Heart right ventricle (tissue), 16 donors: ENCODE measurements at regions of chr16 and their contacts with region 1.

Region 1: DNA sequence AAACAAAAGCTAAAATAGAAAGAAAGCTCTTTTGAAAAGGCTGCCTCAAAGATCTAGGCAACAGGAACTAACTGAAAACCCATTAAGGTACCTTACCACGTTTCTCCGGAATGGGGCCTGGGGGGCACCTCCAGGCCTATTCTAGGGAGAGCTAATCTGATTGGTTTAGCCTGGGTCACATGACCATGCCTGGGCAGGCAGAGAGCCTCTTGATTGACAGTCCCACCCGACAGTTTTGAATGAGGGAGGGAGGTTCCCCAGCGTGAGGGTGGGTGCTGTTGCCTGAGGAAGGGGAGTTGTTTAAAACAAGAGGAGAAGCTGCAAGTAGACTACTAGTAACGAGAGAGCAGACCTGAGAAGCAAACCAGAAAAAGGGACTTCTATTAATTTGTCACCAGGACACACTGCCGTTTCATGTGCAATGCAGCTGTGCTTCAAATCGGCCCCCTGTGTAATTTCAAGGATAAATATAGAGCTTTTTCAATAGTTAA is 143.4 kb upstream of the HS3ST2 start:
- DNase-seq: no peak
- ATAC-seq: peak in 2 of 8 donors; percentile 31 to 42
- H3K4me3 ChIP-seq: no peak overlapping the region
- H3K27ac ChIP-seq: no peak overlapping the region
- H3K4me1 ChIP-seq: peaks cover 0 to 33% (median 6%) of the 10 kb centered on the region in 9 donors
- H3K27me3 ChIP-seq: peaks cover 0 to 17% (median 7%) of the 10 kb centered on the region in 7 donors
- CTCF ChIP-seq: no peak

Region 2: GRCh38 chr16:21179126-21179982 is 1491.2 kb before region 1 on chr16:
- intact Hi-C with region 1: loop called in 1 of 10 experiments (anchors 10 kb)
- DNase-seq: peak in 1 of 2 donors; percentile 15
- ATAC-seq: peak in 7 of 8 donors; percentile 22 to 92 (median 62)
- H3K4me3 ChIP-seq: no peak overlapping the region
- H3K27ac ChIP-seq: peak overlapping the region in 3 of 10 donors; percentile 21 to 37 (median 25)
- H3K4me1 ChIP-seq: peaks cover 0 to 9% (median 0%) of the 10 kb centered on the region in 9 donors
- H3K27me3 ChIP-seq: no peaks in the 10 kb centered on the region
- CTCF ChIP-seq: no peak

Region 3: DNA sequence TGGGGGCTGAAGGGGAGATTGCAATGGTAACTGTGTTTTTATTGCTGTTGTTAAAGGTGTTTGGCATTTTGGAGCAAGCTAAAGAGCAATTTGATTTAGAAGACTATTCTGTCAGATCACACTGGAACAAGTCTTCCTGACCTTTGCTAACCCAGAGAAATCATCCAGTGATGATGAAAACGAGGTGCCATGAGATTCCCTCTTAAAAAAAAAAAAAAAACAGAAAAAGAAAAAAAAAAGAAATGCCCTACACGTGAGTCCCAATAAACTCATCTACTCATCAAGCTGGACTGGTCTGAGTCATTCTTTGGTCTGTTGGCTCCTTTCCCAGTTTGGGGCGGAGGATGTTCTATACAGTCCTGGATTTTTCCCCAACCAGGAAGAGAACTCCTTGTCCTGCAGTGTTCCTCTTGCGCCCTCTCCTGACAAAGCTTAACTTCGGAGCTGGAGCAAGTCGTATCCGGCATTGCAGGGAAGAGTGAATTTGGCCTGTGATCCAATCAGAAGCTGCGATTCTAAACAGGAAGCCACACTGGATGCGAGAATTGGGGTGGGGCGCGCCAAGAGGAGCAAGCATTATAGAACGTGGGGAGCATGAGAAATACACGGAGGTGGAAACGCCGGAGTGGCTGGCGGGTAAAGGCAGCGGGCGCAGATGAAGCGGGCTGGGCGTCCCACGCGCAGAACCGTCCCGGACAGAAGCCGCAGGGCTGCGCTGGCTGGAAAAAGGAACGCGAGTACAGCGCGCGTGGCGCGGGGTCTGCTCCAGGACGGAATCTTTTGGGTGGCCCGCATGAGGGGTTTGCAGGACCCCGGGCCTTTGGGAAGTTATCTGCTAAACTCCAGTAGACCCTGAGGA is 1370.1 kb before region 1 on chr16:
- intact Hi-C with region 1: loop called in 2 of 10 experiments (anchors 10 kb)
- DNase-seq: peak; percentile 72 to 98
- ATAC-seq: peak; percentile 93 to 99 (median 96)
- H3K4me3 ChIP-seq: peak overlapping the region; percentile 7 to 79 (median 64)
- H3K27ac ChIP-seq: peak overlapping the region; percentile 14 to 87 (median 73)
- H3K4me1 ChIP-seq: peaks cover 0 to 19% (median 7%) of the 10 kb centered on the region in 9 donors
- H3K27me3 ChIP-seq: peaks cover 0 to 22% (median 0%) of the 10 kb centered on the region in 7 donors
- CTCF ChIP-seq: peak; percentile 62 to 97 (median 82)

Region 4: DNA sequence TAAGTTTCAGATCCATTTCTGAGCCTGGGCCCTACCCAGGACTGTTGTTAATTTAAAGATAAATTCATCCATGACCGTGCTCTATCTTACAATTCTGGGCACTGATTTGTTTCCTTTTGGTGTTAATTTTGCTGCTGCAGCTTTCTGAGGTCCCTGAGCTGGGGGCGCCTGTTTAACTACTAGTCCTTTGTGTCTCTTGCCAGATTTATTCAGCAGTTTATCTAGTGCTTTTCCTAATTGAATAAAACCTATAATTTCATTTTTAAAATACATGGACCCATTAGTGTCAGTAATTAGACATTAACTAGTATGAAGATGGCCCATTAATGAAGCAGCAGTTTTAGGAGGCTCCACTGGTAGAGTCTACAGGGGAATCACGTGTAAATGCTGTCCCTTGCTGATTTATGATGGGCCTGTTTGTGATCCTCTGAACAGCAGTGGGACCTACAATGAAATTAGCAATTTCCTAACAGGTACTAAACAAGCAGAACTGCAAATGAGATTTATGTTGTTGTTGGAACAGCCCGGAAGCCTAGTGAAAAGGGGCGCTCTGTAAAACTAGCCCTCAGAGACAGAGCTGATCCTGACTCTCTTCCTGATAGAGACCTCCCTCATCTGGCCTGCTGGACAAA is 198.1 kb after region 1 on chr16:
- intact Hi-C with region 1: no loop called
- DNase-seq: no peak
- ATAC-seq: no peak
- H3K4me3 ChIP-seq: no peak overlapping the region
- H3K27ac ChIP-seq: no peak overlapping the region
- H3K4me1 ChIP-seq: no peaks in the 10 kb centered on the region
- H3K27me3 ChIP-seq: peaks cover 0 to 6% (median 0%) of the 10 kb centered on the region in 7 donors
- CTCF ChIP-seq: no peak